Activated B cell treated with CpG ODN at 0.5 μM for 24 hours (primary cell): ENCODE measurements at regions of chr6 and their contacts with region 1.

Region 1: DNA sequence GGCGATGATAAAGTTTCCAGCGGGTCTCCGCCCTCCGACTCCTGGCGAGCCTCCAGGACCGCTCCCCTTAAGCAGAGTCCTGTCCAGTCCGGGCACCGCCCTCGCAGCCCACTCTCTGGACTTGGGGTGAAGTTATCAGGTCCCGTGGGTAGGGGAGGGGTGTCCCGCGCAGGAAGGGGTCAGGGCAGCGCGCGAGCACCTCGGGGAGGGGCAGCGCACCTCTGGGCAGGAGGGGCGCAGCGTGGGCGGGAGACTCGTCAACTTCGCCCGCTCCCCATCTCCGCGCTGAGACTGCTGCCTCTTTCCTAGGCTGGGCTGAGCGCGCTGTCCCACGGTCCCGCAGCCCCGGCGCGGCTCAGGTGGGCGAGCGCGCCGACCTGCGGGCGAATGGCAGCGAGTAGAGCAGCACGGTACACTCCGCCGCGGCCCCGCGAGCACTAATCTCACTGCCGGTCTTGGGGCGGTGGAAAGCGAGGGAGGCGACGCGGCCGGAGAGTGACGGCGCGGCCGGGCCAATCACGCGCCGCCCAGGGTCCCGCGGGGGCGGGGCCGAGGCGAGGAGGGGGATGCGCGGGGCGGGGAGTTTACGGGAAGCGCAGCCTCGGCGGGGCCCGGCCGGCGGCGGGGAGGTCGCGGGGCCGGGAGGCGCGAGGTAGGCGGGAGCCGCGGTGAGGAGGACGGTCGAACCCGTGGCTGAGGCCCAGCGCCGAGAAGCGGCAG is at the start of gene MAN1A1:
- DNase-seq: peak; percentile 96
- ATAC-seq: peak; percentile 85
- H3K4me3 Mint-ChIP-seq: peak within 1 kb of the TSS; percentile 93
- H3K27ac Mint-ChIP-seq: peak within 1 kb of the TSS; percentile 94
- H3K4me1 Mint-ChIP-seq: peaks cover 61% of the 10 kb centered on the region
- H3K27me3 Mint-ChIP-seq: no peaks in the 10 kb centered on the region
- CTCF ChIP-seq: no peak
- total RNA-seq, gene MAN1A1: 17.7 and 18.1 TPM in 2 replicates

Region 2: DNA sequence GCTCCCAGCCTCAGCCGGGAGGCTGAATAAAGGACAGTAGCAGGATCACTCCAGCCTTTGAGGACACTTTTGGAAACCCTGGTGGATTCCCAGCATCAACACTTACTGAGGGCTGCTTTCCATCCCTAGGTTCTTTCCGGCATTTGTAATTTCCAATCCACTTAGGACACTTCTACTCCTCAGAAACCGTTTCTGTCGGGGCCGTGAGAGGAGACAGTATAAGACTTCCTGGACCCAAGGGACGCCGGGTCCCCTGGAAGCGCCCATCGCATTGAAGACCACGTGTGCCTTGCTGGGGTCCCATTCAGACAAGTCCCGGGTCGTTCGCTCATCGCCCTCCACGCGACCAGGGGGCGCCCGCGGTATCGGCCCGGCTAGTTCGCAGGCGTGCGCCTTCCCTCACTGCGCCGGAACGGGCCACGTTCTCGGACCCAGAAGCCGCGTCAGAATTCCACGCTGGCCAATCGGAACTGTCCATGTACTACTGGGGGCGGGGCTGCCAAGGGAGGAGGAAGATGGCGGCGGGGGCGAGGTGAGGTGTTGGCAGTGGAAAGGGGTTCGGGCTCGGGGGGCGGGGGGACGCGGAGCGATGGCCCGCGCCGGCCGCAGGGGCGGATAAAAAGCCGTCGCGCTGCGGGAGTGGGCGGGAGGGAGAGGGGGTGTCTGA is 1674.4 kb before region 1 on chr6 and contains the start of gene NUS1:
- CTCF ChIA-PET with region 1: no interaction called
- POLR2A ChIA-PET with region 1: no interaction called
- intact Hi-C with region 1: loop called (anchors 10 kb)
- DNase-seq: peak; percentile 97
- ATAC-seq: peak; percentile 98
- H3K4me3 Mint-ChIP-seq: peak within 1 kb of the TSS; percentile 95
- H3K27ac Mint-ChIP-seq: peak within 1 kb of the TSS; percentile 89
- H3K4me1 Mint-ChIP-seq: peaks cover 42% of the 10 kb centered on the region
- H3K27me3 Mint-ChIP-seq: no peaks in the 10 kb centered on the region
- CTCF ChIP-seq: no peak
- total RNA-seq, gene NUS1: 29.1 and 30.6 TPM in 2 replicates

Region 3: GRCh38 chr6:118408863-118409262 is 940.6 kb before region 1 on chr6:
- CTCF ChIA-PET with region 1: no interaction called
- POLR2A ChIA-PET with region 1: no interaction called
- intact Hi-C with region 1: no loop called
- DNase-seq: no peak
- ATAC-seq: no peak
- H3K4me3 Mint-ChIP-seq: no peak overlapping the region
- H3K27ac Mint-ChIP-seq: no peak overlapping the region
- H3K4me1 Mint-ChIP-seq: no peaks in the 10 kb centered on the region
- H3K27me3 Mint-ChIP-seq: no peaks in the 10 kb centered on the region
- CTCF ChIP-seq: no peak

Region 4: GRCh38 chr6:118456982-118457381 is 892.5 kb before region 1 on chr6:
- CTCF ChIA-PET with region 1: no interaction called
- POLR2A ChIA-PET with region 1: no interaction called
- intact Hi-C with region 1: no loop called
- DNase-seq: no peak
- ATAC-seq: no peak
- H3K4me3 Mint-ChIP-seq: no peak overlapping the region
- H3K27ac Mint-ChIP-seq: no peak overlapping the region
- H3K4me1 Mint-ChIP-seq: no peaks in the 10 kb centered on the region
- H3K27me3 Mint-ChIP-seq: no peaks in the 10 kb centered on the region
- CTCF ChIP-seq: no peak

Region 5: GRCh38 chr6:118893807-118894424 is 455.6 kb before region 1 on chr6 and contains the start of gene ASF1A:
- CTCF ChIA-PET with region 1: no interaction called
- POLR2A ChIA-PET with region 1: no interaction called
- intact Hi-C with region 1: loop called (anchors 1 kb)
- DNase-seq: peak; percentile 86
- ATAC-seq: peak; percentile 59
- H3K4me3 Mint-ChIP-seq: peak within 1 kb of the TSS; percentile 99
- H3K27ac Mint-ChIP-seq: peak within 1 kb of the TSS; percentile 90
- H3K4me1 Mint-ChIP-seq: peaks cover 65% of the 10 kb centered on the region
- H3K27me3 Mint-ChIP-seq: no peaks in the 10 kb centered on the region
- CTCF ChIP-seq: no peak
- total RNA-seq, gene ASF1A: 12.1 and 13.1 TPM in 2 replicates

Region 6: DNA sequence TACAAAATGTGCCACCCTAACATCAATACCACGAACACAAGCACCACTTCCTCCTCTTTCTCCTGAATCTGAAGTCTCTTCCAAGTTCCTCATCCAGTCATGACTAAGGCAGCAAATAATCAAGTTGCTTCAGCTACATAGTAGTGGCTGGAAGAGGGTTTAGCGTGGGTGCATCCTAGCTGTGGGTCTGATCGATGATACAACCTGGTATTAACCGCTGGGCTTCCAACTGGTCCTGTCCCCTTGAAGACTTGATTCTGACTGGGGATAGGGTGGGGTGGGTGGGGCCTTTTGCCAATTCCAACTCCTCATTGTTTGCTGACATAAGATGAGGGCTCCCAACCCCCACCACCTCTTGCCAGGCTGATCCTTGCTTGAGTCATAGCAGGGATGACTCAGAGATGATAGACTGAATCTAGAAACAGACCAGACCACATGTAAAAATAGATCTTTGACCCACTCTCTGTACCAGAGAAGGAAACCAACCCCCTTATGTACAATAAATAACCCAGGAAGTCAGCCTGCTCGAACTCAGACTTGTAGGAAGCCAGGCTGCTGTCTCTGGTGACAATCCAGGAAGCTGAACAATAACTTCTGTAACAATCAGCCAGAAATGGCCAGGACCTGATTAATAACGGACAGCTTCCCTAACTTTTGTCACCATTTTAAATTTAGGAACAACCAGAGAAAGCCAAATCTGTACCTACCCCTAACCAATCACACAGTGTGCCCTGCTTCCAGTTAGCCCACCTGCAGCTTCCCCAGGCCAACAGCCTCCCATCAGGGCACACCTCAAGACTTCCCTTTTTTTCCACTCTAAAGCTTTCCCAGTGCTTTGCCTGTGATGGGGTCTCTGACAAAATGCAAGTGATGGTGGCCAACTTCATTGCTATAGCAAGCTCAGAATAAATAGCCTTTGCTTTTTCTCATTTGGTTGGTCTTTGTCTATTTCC is 202.1 kb before region 1 on chr6:
- CTCF ChIA-PET with region 1: interaction called, 3 read pairs
- POLR2A ChIA-PET with region 1: no interaction called
- intact Hi-C with region 1: loop called (anchors 1 kb)
- DNase-seq: no peak
- ATAC-seq: peak; percentile 82
- H3K4me3 Mint-ChIP-seq: no peak overlapping the region
- H3K27ac Mint-ChIP-seq: no peak overlapping the region
- H3K4me1 Mint-ChIP-seq: peaks cover 8% of the 10 kb centered on the region
- H3K27me3 Mint-ChIP-seq: peaks cover 2% of the 10 kb centered on the region
- CTCF ChIP-seq: no peak

Region 7: DNA sequence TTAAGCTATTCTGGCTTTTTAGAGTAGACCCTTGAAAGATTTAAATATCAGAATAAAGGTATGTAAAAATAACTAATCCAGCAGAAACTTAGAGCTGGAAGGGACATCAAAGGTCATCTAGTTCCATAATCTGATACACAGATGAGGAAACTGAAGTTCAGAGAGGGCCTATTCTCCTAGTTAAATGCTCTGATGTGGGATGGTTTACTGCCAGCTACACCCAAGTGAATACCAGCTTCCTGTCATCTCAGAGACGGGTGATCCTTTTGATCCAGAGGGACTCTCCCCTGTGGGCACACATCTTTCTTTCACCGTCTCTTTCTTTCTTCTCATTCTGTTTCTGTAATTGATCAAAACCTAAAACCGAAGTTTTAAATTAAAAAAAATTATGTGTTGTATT is 94.0 kb before region 1 on chr6:
- CTCF ChIA-PET with region 1: no interaction called
- POLR2A ChIA-PET with region 1: no interaction called
- intact Hi-C with region 1: no loop called
- DNase-seq: no peak
- ATAC-seq: no peak
- H3K4me3 Mint-ChIP-seq: no peak overlapping the region
- H3K27ac Mint-ChIP-seq: no peak overlapping the region
- H3K4me1 Mint-ChIP-seq: peaks cover 4% of the 10 kb centered on the region
- H3K27me3 Mint-ChIP-seq: no peaks in the 10 kb centered on the region
- CTCF ChIP-seq: no peak

Region 8: GRCh38 chr6:119395192-119395591 is 45.7 kb after region 1 on chr6:
- CTCF ChIA-PET with region 1: no interaction called
- POLR2A ChIA-PET with region 1: no interaction called
- intact Hi-C with region 1: loop called (anchors 2 kb)
- DNase-seq: no peak
- ATAC-seq: peak; percentile 91
- H3K4me3 Mint-ChIP-seq: no peak overlapping the region
- H3K27ac Mint-ChIP-seq: no peak overlapping the region
- H3K4me1 Mint-ChIP-seq: peaks cover 21% of the 10 kb centered on the region
- H3K27me3 Mint-ChIP-seq: peaks cover 13% of the 10 kb centered on the region
- CTCF ChIP-seq: no peak

Region 9: GRCh38 chr6:119586250-119586882 is 236.9 kb after region 1 on chr6:
- CTCF ChIA-PET with region 1: interaction called, 3 read pairs
- POLR2A ChIA-PET with region 1: no interaction called
- intact Hi-C with region 1: loop called (anchors 2 kb)
- DNase-seq: no peak
- ATAC-seq: peak; percentile 66
- H3K4me3 Mint-ChIP-seq: no peak overlapping the region
- H3K27ac Mint-ChIP-seq: no peak overlapping the region
- H3K4me1 Mint-ChIP-seq: peaks cover 12% of the 10 kb centered on the region
- H3K27me3 Mint-ChIP-seq: no peaks in the 10 kb centered on the region
- CTCF ChIP-seq: no peak

Region 10: GRCh38 chr6:121334299-121335086 is 1985.0 kb after region 1 on chr6 and contains the start of gene TBC1D32:
- CTCF ChIA-PET with region 1: no interaction called
- POLR2A ChIA-PET with region 1: no interaction called
- intact Hi-C with region 1: loop called (anchors 1 kb)
- DNase-seq: peak; percentile 88
- ATAC-seq: peak; percentile 89
- H3K4me3 Mint-ChIP-seq: peak within 1 kb of the TSS; percentile 94
- H3K27ac Mint-ChIP-seq: peak within 1 kb of the TSS; percentile 96
- H3K4me1 Mint-ChIP-seq: peaks cover 31% of the 10 kb centered on the region
- H3K27me3 Mint-ChIP-seq: no peaks in the 10 kb centered on the region
- CTCF ChIP-seq: no peak
- total RNA-seq, gene TBC1D32: 11.3 and 17.8 TPM in 2 replicates